AG04449 (cell line): ENCODE measurements at regions of chr16 and their contacts with region 1.

Region 1: DNA sequence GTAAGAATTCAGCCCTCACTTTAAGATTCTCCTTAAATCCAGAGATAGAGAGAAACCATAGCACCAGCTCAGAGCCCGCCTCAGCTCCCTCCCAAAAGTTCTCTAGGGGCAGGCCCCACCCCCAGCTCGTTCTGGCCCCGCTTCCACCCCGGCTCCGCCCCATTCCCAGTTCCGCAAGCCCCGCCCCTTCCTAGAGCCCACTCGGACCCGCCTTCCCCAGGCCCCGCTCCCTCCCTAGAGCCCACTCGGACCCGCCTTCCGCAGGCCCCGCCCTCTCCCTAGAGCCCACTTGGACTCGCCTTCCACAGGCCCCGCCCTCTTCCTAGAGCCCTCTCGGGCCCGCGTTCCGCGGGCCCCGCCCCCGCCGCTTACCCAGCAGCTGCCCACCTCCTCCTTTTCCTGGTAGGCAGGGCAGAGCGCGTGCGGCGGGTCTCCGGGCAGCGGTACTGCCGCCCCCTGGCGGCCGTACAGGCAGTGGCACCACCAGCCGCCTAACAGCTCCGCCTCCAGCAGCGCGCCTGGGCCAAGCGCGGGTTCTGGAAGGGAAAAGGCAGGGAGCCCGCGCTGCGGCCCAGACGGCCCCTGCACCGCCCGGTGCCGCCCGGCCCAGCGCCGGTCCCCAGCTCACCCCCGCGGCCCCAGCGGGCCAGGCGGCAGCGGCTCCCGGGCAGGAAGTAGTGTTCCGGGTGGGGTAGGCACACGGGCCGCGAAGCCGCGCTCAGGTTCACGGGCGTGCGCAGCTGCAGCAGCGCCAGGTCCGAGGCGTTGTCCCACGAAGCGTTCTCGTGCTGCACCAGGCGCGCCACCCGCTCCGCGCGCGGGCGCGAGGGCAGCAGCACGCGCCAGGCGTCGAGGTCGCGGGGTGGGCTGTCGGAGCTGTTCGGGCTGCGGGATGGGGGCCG is 6.8 kb upstream of the PRSS8 start:
- DNase-seq: peak; percentile 84
- H3K4me3 ChIP-seq: peak overlapping the region; percentile 57
- CTCF ChIP-seq: peak; percentile 99

Region 2: DNA sequence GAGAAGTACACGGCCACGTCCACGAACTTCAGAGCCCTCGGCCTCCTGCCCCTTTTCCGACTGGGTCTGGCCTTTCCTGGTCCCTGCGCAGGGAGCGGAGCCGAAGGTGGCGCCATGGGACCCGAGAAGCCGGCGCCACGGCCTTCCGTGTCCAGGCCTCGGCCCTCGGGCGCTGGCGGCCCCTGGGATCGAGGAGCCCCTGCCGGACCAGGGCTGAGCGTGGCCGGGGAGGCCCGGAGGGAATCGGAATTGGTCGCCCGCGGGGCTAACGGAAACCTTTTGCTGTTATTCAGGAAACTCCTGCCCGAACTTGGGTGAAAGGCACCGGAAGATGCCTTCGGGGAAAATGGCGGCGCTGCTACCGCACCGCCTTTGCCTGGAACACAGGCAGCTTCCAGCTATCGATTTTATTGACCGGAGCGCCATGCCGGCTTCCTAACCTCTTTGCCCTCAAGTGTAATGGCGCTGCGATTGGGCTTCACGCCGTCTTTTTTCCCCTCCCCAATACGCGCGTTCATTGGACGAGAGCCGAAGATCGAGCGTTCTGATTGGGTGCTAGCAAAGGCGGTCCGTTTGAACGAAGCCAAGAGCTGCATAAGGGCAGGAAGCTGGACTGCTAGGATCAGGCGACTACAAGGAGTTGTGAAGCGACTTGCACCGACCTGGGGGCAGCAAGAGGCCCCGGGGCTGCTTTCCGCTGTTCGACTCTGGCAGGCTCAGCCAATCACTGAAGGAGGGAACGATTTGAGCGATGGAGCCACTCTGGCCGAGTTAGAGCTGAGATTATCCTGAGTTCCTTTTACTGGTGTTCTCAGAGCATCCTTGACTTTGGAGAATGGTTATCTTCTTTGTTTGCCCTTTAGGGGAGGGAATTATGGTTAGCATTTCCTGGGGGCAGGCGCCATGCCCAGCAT is 532.2 kb before region 1 on chr16 and contains the start of gene ZNF689:
- CTCF ChIA-PET with region 1: no interaction called
- POLR2A ChIA-PET with region 1: no interaction called
- DNase-seq: peak; percentile 78
- H3K4me3 ChIP-seq: peak within 1 kb of the TSS; percentile 76
- CTCF ChIP-seq: no peak

Region 3: GRCh38 chr16:30949650-30950515 is 192.5 kb before region 1 on chr16:
- CTCF ChIA-PET with region 1: interaction called, 45 read pairs
- POLR2A ChIA-PET with region 1: no interaction called
- DNase-seq: no peak
- H3K4me3 ChIP-seq: peak overlapping the region; percentile 71
- CTCF ChIP-seq: no peak

Region 4: GRCh38 chr16:31020536-31020935 is 121.8 kb before region 1 on chr16:
- CTCF ChIA-PET with region 1: no interaction called
- POLR2A ChIA-PET with region 1: no interaction called
- DNase-seq: no peak
- H3K4me3 ChIP-seq: no peak overlapping the region
- CTCF ChIP-seq: no peak

Region 5: GRCh38 chr16:31094424-31095120 is 47.8 kb before region 1 on chr16 and contains the start of gene VKORC1:
- CTCF ChIA-PET with region 1: interaction called, 18 read pairs
- POLR2A ChIA-PET with region 1: no interaction called
- DNase-seq: peak; percentile 78
- H3K4me3 ChIP-seq: peak within 1 kb of the TSS; percentile 95
- CTCF ChIP-seq: no peak

Region 6: GRCh38 chr16:31108035-31108793 is 34.1 kb before region 1 on chr16 and contains the start of gene BCKDK:
- CTCF ChIA-PET with region 1: interaction called, 10 read pairs
- POLR2A ChIA-PET with region 1: no interaction called
- DNase-seq: no peak
- H3K4me3 ChIP-seq: peak within 1 kb of the TSS; percentile 77
- CTCF ChIP-seq: no peak

Region 7: DNA sequence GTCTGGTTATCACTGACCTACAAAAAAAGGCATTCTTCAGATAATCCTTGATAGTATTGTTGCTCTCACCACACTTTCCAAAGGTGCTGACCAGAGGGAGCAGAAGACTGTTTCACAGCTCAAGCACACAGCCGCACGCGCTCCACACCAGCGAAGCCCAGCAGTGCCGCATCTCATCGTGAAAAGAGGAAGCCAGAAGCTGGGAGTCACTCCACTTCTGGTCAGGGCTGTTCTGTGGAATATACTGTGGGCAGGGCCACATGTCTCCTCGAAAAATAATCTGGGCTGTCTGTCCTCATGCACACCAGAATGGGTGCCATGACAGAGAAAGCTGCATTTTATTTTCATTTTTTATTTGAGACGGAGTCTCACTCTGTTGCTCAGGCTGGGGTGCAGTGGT is 14.8 kb after region 1 on chr16:
- CTCF ChIA-PET with region 1: interaction called, 101 read pairs
- POLR2A ChIA-PET with region 1: interaction called, 3 read pairs
- DNase-seq: no peak
- H3K4me3 ChIP-seq: no peak overlapping the region
- CTCF ChIP-seq: no peak

Region 8: GRCh38 chr16:31440516-31441184 is 298.3 kb after region 1 on chr16:
- CTCF ChIA-PET with region 1: interaction called, 10 read pairs
- POLR2A ChIA-PET with region 1: interaction called, 4 read pairs
- DNase-seq: no peak
- H3K4me3 ChIP-seq: no peak overlapping the region
- CTCF ChIP-seq: no peak